ENCODE measurements at regions of chr3 and their contacts with region 1.

Region 1: DNA sequence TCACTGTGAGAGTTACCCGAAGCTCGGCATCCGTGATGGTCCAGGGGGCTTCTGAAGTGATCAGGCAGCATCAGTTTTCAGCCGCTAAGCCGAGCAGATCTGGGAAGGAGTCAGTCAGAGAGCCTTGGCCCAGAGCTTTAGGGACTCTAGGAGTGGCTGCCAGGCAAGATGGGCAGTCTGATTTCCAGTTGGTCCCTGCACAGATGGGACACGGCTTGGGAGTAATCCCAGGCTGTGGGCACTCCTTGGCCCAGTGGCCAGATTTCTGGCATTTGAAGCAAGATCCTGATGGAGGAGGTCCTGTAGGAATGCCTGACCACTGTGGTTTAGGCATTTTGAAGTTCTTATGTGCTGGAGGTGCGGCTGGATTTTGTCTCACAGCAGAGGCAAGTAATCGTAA is 10.5 kb upstream of the IP6K2 start:
- DNase-seq: no peak
- ATAC-seq: no peak
- H3K4me3 ChIP-seq: no peak overlapping the region
- H3K4me3 Mint-ChIP-seq: no peak overlapping the region
- H3K27ac ChIP-seq: no peak overlapping the region
- H3K27ac Mint-ChIP-seq: no peak overlapping the region
- H3K4me1 ChIP-seq: no peaks in the 10 kb centered on the region
- H3K4me1 Mint-ChIP-seq: no peaks in the 10 kb centered on the region
- H3K27me3 ChIP-seq: no peaks in the 10 kb centered on the region
- H3K27me3 Mint-ChIP-seq: no peaks in the 10 kb centered on the region
- CTCF ChIP-seq: no peak

Region 2: GRCh38 chr3:48739955-48740823 is 12.7 kb after region 1 on chr3:
- CTCF ChIA-PET with region 1: interaction called, 11 read pairs
- POLR2A ChIA-PET with region 1: interaction called, 3 read pairs
- intact Hi-C with region 1: no loop called
- DNase-seq: peak; percentile 67
- ATAC-seq: peak; percentile 90
- H3K4me3 ChIP-seq: no peak overlapping the region
- H3K4me3 Mint-ChIP-seq: no peak overlapping the region
- H3K27ac ChIP-seq: no peak overlapping the region
- H3K27ac Mint-ChIP-seq: no peak overlapping the region
- H3K4me1 ChIP-seq: peaks cover 0 to 8% of the 10 kb centered on the region in 2 donors
- H3K4me1 Mint-ChIP-seq: peaks cover 13% of the 10 kb centered on the region
- H3K27me3 ChIP-seq: no peaks in the 10 kb centered on the region
- H3K27me3 Mint-ChIP-seq: no peaks in the 10 kb centered on the region
- CTCF ChIP-seq: peak; percentile 77

Region 3: GRCh38 chr3:48898383-48899234 is 171.1 kb after region 1 on chr3 and contains the start of gene SLC25A20:
- CTCF ChIA-PET with region 1: no interaction called
- POLR2A ChIA-PET with region 1: interaction called, 12 read pairs
- intact Hi-C with region 1: no loop called
- DNase-seq: peak; percentile 88
- ATAC-seq: peak; percentile 99
- H3K4me3 ChIP-seq: peak within 1 kb of the TSS; percentile 24 to 86 (median 73)
- H3K4me3 Mint-ChIP-seq: peak within 1 kb of the TSS; percentile 95
- H3K27ac ChIP-seq: peak within 1 kb of the TSS; percentile 30 to 80
- H3K27ac Mint-ChIP-seq: peak within 1 kb of the TSS; percentile 83
- H3K4me1 ChIP-seq: peaks cover 24 to 29% of the 10 kb centered on the region in 2 donors
- H3K4me1 Mint-ChIP-seq: peaks cover 35% of the 10 kb centered on the region
- H3K27me3 ChIP-seq: no peaks in the 10 kb centered on the region
- H3K27me3 Mint-ChIP-seq: no peaks in the 10 kb centered on the region
- CTCF ChIP-seq: no peak
- total RNA-seq, gene SLC25A20: 11.6 and 12.2 TPM in 2 replicates